ENCODE measurements at regions of chr19 and their contacts with region 1.

Region 1: DNA sequence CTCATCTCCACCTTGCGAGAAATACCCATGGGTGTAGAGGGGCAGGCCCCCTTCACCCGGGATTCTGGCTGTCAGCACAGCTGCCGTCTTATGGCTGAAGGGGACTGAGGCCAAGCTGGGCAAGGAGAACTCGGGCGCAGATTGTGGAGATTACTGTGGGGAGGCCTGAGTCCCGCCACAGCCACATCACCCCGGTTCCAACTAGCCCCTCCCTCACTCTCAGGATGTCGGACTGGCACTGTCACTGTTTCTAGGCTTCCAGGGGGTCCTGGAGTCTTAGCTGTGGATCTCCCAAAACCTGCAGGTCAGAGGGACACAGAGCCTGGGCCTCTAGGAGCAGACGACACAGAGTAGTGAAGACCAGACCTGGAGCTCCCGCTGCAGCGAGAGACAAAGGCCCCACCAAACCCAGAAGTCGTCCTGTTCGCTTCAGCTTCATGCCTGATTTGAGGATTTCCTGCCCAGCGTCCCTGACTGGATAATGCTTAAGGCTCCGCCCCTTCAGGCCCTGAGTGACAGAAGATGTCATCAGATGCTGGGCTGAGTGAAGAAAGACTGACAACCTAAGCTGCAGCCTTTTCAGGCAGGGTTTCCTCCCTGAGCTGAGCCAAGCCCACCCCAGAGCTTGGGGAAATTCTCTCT is 55.8 kb downstream of the ZNF93 start:
- DNase-seq: no peak
- H3K4me3 ChIP-seq: no peak overlapping the region
- H3K4me1 ChIP-seq: no peaks in the 10 kb centered on the region
- H3K27me3 ChIP-seq: no peaks in the 10 kb centered on the region

Region 2: DNA sequence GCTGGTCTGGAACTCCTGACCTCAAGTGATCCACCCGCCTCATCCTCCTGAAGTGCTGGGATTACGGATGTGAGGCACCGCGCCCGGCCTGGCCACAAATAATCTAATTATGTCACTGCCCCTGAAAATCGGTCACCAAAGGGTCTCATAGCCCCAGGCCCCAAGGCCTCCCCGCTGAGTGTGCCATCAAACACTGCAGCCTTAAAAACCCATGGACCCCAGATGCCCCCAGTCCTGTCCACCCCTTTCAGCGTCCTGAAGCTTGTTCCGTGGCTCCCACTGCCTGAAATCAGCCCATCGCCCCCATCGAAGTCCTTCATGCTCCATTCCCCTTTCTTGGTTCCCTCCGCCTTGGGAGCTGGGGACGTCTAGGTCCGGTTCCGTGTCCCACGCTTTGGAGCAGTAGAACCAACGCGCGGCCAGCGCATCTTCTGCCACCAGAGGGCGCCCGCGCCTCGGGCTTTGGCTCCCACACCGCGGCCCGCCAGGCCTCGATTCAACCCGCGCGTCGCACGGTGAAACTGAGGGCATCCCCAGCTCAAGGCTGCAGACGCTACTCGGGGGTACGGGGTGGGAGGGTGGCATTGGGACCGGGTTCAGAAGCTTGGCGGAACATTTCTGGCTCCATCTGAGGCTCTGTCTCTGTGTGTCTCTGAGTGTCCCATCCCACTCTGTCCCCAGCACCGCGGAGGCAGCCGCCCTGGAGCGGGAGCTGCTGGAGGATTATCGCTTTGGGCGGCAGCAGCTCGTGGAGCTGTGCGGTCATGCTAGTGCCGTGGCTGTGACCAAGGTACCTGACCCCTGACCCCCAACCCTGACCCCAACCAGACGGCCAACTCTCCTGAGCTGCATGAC is 424.4 kb before region 1 on chr19:
- in situ Hi-C with region 1: loop called (anchors 25 kb)
- DNase-seq: peak; percentile 44 to 89
- H3K4me3 ChIP-seq: no peak overlapping the region
- H3K4me1 ChIP-seq: no peaks in the 10 kb centered on the region
- H3K27me3 ChIP-seq: no peaks in the 10 kb centered on the region

Region 3: DNA sequence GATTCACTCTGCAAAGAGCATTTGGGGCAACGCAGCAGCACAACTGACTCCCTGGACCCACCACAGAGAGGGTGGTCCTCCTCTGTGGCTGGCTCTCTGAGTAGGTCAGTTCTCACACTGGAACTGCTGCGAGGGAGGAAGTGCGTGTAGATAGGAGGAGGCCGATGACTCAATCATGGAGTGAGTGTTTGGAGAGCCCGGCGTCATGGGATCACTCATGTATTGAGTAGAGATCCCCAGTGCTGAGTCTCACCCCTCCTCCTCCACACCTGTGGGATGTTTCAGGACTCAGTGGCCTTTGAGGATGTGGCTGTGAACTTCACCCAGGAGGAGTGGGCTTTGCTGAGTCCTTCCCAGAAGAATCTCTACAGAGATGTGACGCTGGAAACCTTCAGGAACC is 279.0 kb before region 1 on chr19:
- in situ Hi-C with region 1: no loop called
- DNase-seq: no peak
- H3K4me3 ChIP-seq: no peak overlapping the region
- H3K4me1 ChIP-seq: no peaks in the 10 kb centered on the region
- H3K27me3 ChIP-seq: no peaks in the 10 kb centered on the region

Measured in HAP-1 (cell line).